ENCODE measurements at regions of chr15 and their contacts with region 1.

Region 1: DNA sequence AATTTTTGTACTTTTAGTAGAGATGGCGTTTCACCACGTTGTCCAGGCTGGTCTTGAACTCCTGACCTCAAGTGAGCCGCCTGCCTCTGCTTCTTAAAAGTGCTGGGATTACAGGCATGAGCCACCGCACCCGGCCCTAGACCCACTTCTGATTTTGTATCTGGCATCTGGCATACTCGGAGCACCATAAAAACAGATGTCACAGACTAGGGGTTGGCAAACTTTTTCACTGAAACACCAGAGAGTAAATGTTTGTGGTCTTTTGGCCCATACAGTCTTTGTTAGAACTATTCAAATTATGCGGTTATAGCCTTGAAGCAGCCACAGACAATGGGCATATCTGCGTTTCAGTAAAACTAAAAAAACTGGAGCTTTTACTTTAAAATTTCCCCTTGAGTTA is 110.7 kb downstream of the TJP1 start:
- DNase-seq: no peak
- ATAC-seq: no peak

Region 2: DNA sequence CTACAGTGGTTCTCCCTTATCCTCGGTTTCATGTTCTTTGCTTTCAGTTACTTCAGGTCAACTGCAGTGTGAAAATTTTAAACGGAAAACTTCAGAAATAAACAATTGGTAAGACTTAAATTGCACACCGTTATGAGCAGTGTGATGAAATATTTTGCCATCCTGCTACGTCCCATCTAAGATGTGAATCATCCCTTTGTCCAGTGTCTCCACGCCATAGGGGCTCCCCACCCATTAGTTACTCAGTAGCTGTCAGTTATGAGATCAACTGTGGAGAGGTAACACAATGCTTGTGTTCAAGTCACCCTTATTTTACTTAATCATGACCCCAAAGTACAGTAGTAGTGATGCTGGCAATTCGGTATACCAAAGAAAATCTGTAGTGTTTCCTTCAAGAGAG is 63.4 kb after region 1 on chr15:
- intact Hi-C with region 1: loop called in 1 of 2 experiments (anchors 10 kb)
- DNase-seq: no peak
- ATAC-seq: peak in 1 of 2 donors; percentile 31

Measured in left cardiac atrium (tissue), 4 donors.